ENCODE measurements at regions of chr5 and their contacts with region 1.

Region 1: GRCh38 chr5:77143998-77144836 is 57.1 kb upstream of the ZBED3 start:
- DNase-seq: peak; percentile 36 to 51
- ATAC-seq: peak; percentile 74 to 81
- H3K4me3 ChIP-seq: no peak overlapping the region
- H3K27ac ChIP-seq: no peak overlapping the region
- H3K4me1 ChIP-seq: no peaks in the 10 kb centered on the region
- H3K27me3 ChIP-seq: no peaks in the 10 kb centered on the region
- CTCF ChIP-seq: peak; percentile 36 to 79 (median 51)
- POLR2A ChIP-seq: no peak

Region 2: GRCh38 chr5:77239126-77239741 is 95.0 kb after region 1 on chr5:
- in situ Hi-C with region 1: no loop called
- intact Hi-C with region 1: loop called (anchors 2 kb)
- DNase-seq: no peak
- ATAC-seq: no peak
- H3K4me3 ChIP-seq: no peak overlapping the region
- H3K27ac ChIP-seq: no peak overlapping the region
- H3K4me1 ChIP-seq: no peaks in the 10 kb centered on the region
- H3K27me3 ChIP-seq: no peaks in the 10 kb centered on the region
- CTCF ChIP-seq: peak in 1 of 5 experiments; percentile 24
- POLR2A ChIP-seq: no peak

Region 3: GRCh38 chr5:77486344-77486962 is 342.2 kb after region 1 on chr5:
- in situ Hi-C with region 1: loop called in 2 of 4 experiments (anchors 10 to 25 kb)
- intact Hi-C with region 1: no loop called
- DNase-seq: no peak
- ATAC-seq: no peak
- H3K4me3 ChIP-seq: no peak overlapping the region
- H3K27ac ChIP-seq: no peak overlapping the region
- H3K4me1 ChIP-seq: peaks cover 0 to 4% of the 10 kb centered on the region in 2 donors
- H3K27me3 ChIP-seq: no peaks in the 10 kb centered on the region
- CTCF ChIP-seq: no peak
- POLR2A ChIP-seq: no peak

Measured in gastrocnemius medialis (tissue), 4 donors.